Right cardiac atrium (tissue), 5 donors: ENCODE measurements at regions of chr12 and their contacts with region 1.

Region 1: GRCh38 chr12:14845350-14845750 is 2.0 kb upstream of the ART4 start:
- DNase-seq: peak in 1 of 3 donors; percentile 42
- ATAC-seq: peak; percentile 33 to 52
- H3K4me3 ChIP-seq: no peak overlapping the region
- H3K27ac ChIP-seq: no peak overlapping the region
- H3K4me1 ChIP-seq: peaks cover 13% of the 10 kb centered on the region
- H3K27me3 ChIP-seq: no peaks in the 10 kb centered on the region

Region 2: DNA sequence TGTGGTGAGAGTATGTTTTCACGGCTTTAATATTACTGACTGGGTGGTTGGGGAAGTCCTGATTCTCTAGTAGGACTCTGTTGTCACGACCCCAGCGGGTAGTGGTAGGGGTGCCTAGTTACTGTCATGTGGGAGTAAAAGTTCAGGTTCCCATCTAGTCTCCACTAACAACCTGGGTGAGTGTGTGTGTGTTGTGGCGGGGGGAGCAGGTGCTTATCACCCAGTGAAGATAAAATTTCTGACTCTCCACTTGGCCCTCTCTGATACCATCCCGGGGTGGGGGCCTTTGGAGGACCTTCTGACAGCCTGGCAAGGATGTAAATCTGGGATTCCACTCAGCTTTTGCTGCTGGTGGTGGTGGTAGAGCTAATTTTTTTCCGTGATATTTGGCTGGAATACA is 113.5 kb before region 1 on chr12:
- intact Hi-C with region 1: no loop called
- DNase-seq: no peak
- ATAC-seq: no peak
- H3K4me3 ChIP-seq: no peak overlapping the region
- H3K27ac ChIP-seq: no peak overlapping the region
- H3K4me1 ChIP-seq: no peaks in the 10 kb centered on the region
- H3K27me3 ChIP-seq: no peaks in the 10 kb centered on the region

Region 3: DNA sequence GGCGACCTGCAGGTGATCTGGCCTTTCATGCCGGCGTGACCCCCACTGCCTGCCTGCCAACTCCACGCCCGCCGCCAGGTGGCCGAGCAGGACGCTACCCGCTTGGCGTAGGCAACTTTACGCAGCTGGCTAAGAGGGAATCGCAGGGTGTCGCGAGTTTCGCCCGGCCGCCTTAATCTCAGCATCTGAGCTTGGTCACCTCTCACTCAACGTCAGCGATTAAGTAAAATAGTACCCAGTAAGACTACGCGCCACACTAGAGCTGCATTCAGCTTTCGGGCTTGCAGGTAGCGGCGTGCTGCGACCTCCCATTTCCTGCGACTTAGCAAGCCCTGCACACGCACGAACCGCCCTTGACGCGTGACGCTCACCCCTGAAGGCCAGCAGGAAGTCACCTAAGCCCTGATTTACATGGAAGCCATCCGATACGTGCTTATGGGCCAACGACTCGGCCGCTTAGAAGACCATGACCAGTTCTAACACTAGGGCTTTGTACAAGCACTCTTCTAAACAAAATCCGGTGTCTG is 75.3 kb before region 1 on chr12:
- intact Hi-C with region 1: loop called in 1 of 4 experiments (anchors 10 kb)
- DNase-seq: peak; percentile 80 to 92 (median 92)
- ATAC-seq: peak; percentile 63 to 71
- H3K4me3 ChIP-seq: peak overlapping the region; percentile 86
- H3K27ac ChIP-seq: peak overlapping the region; percentile 92
- H3K4me1 ChIP-seq: no peaks in the 10 kb centered on the region
- H3K27me3 ChIP-seq: no peaks in the 10 kb centered on the region

Region 4: GRCh38 chr12:14885718-14886221 is 40.4 kb after region 1 on chr12 and contains the start of gene MGP:
- intact Hi-C with region 1: loop called in 3 of 4 experiments (anchors 5 kb)
- DNase-seq: peak; percentile 64 to 84 (median 77)
- ATAC-seq: peak; percentile 92 to 94
- H3K4me3 ChIP-seq: peak within 1 kb of the TSS; percentile 66
- H3K27ac ChIP-seq: peak within 1 kb of the TSS; percentile 95
- H3K4me1 ChIP-seq: peaks cover 6% of the 10 kb centered on the region
- H3K27me3 ChIP-seq: no peaks in the 10 kb centered on the region
- total RNA-seq, gene MGP: 660 to 1,578 (median 1,064) TPM

Region 5: DNA sequence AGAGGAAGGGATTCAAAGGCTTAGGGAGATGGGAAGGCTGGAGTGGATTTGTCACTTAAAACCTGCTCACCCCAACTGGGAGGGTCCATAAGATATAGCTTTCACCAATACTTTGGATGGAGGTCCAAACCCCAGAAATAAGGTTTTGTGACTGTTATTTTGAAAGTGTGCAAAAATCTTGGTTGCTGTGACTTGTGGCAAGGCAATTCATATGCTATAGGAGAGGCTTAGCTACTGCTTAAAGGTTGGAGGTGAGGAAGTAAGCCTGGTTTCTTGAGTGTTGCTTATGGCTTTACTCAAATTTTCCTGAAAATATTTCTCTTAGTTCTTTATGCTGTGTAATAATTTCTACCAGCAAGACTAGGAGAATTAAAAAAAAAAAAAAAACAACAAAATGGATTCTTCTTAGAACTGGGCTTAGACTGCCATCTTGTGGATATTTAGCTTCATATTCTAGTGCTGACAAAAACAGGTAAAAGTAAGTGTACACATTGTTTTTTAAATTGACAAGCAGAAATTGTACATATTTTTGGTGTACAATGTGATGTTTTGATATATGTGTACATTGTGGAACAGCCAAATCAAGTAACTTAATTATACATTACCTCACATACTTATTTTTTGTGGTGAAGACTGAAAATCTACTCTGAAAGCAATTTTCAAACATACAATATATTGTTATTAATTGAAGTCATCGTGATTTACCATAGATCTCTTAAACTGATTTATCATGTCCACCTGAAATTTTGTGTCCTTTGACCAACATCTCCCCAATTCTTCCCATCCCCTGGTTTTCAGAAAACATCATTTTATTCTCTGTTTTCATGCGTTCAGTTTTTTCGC is 150.5 kb after region 1 on chr12:
- intact Hi-C with region 1: loop called (anchors 2 to 5 kb)
- DNase-seq: no peak
- ATAC-seq: no peak
- H3K4me3 ChIP-seq: no peak overlapping the region
- H3K27ac ChIP-seq: no peak overlapping the region
- H3K4me1 ChIP-seq: peaks cover 2% of the 10 kb centered on the region
- H3K27me3 ChIP-seq: no peaks in the 10 kb centered on the region